Motor neuron (in vitro differentiated cells): ENCODE measurements at regions of chr10 and their contacts with region 1.

Region 1: DNA sequence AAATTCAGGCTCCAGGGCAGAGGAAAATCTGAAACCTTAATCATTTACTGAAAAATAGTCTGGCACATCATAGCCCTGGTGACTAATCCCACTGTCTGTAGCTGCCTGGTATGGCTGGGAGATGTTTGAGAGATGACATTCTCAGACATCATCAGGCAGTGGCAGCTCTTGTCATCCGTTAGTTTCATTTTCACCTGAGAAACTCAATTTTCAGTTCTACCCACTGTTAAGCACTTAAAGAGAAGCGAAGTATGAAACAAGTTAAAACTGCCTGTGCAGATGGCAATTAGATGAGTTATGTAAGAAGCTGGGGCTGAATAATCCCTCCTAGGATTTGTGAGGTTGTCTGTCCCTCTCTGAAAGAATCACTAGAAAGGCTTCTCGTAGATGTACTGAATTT is 150.2 kb downstream of the NSUN6 start:
- ATAC-seq: peak in 5 of 8 experiments; percentile 42 to 69 (median 59)
- H3K4me3 ChIP-seq: no peak overlapping the region
- H3K27ac ChIP-seq: no peak overlapping the region
- H3K4me1 ChIP-seq: peaks cover 0 to 26% of the 10 kb centered on the region in 2 donors

Region 2: DNA sequence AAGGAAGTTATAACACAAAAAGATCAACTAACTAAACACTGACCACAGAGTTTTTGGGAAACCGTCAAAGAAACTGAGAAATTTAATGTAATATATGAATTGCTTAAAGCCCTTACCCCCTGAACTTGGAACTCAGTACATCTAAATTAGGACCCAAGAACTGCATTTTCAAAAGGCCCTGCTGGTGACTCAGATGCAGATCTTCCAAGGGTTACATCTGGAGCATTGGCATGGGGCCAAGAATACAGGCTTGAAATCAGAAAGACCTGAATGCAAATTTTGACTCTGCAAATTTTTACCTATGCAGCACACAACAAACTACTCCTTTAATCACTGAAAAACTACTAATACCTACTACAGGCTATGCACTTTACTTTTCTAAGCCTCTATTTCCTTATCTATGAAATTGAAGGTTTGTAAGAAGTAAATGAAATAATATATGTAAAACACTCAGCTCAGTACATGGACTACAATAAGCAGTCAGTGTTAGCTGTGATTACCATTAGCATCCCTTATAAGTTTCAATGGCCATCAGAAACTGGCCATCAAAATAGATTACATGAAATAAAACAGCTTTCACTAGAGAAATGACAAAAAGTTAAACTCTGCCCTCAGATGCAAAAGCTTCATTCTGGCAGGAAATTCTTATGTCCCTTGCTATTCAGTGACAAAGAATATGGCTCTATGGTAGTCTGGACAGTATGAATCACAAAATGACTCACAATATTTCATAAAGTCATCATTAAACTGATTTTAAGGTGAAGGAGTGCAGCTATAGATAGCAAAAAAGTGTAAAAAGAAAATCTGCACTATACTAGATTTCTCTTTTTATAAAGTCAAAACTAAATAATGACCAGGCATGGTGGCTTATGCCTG is 106.5 kb after region 1 on chr10:
- in situ Hi-C with region 1: loop called in 3 of 9 experiments (anchors 25 kb)
- ATAC-seq: peak in 4 of 8 experiments; percentile 16 to 89 (median 88)
- H3K4me3 ChIP-seq: no peak overlapping the region
- H3K27ac ChIP-seq: no peak overlapping the region
- H3K4me1 ChIP-seq: peaks cover 0 to 3% of the 10 kb centered on the region in 2 donors

Region 3: GRCh38 chr10:18659120-18659818 is 158.1 kb after region 1 on chr10 and contains the start of gene ARL5B:
- in situ Hi-C with region 1: loop called in 1 of 9 experiments (anchors 25 kb)
- ATAC-seq: peak; percentile 84 to 98 (median 96)
- H3K4me3 ChIP-seq: peak within 1 kb of the TSS; percentile 80 to 96 (median 86)
- H3K27ac ChIP-seq: peak within 1 kb of the TSS; percentile 95 to 97
- H3K4me1 ChIP-seq: peaks cover 20 to 21% of the 10 kb centered on the region in 2 donors
- total RNA-seq, gene ARL5B: 9.0 to 45.7 (median 35.8) TPM